Activated CD4-positive, alpha-beta memory T cell treated with anti-CD3 and anti-CD28 coated beads for 36 hours (primary cell): ENCODE measurements at regions of chr14 and their contacts with region 1.

Region 1: DNA sequence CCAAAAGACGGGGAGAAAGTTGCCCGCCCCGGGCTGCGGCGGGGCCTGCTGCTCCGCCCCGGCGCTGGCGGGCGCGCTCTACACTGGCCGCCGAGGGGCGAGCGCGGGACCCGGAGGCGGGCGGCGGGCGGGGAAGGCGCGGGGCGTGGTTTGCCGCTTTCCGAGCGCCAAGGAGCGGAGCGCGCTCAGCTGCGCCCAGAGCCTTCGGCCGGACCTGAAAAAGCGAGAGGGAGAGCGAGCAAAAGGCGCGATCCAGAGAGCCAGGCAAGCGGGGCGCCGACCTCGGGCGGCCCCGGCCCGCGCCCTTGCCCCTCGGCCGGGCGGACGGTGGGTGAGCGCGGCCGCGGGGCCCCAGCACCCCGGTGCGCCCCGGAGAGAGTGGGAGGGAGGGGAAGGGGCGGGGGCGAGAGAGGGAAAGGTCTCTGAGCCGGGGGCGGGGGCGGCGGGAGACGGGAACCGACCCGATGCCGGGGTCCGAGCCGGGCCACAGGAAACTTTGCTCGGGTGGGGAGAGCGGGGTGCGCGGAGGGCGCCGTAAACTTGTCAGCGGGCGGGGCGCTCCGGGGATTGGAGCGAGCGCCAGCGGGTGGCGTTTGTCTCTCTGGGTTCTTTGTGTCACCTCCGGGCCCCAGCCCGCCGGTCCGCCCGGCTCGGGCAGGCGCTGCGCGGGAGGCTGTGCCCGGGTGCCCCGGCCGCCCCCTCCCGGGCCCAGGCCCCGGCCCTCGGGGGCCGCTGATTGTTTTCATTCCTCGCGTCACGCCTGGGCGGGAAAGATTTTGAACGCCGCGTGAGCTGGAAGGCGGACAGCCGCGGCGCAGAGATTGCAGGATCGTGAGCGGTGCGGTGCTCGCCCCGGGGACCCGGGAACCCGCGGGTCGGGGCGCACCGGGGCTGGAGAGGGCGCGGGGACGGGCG is at the start of gene SYNE2:
- DNase-seq: peak; percentile 87
- H3K4me3 Mint-ChIP-seq: peak within 1 kb of the TSS; percentile 89
- H3K27ac Mint-ChIP-seq: peak within 1 kb of the TSS; percentile 86
- H3K4me1 Mint-ChIP-seq: peaks cover 39% of the 10 kb centered on the region
- H3K27me3 Mint-ChIP-seq: no peaks in the 10 kb centered on the region
- total RNA-seq, gene SYNE2: 27.6 to 27.7 TPM

Region 2: DNA sequence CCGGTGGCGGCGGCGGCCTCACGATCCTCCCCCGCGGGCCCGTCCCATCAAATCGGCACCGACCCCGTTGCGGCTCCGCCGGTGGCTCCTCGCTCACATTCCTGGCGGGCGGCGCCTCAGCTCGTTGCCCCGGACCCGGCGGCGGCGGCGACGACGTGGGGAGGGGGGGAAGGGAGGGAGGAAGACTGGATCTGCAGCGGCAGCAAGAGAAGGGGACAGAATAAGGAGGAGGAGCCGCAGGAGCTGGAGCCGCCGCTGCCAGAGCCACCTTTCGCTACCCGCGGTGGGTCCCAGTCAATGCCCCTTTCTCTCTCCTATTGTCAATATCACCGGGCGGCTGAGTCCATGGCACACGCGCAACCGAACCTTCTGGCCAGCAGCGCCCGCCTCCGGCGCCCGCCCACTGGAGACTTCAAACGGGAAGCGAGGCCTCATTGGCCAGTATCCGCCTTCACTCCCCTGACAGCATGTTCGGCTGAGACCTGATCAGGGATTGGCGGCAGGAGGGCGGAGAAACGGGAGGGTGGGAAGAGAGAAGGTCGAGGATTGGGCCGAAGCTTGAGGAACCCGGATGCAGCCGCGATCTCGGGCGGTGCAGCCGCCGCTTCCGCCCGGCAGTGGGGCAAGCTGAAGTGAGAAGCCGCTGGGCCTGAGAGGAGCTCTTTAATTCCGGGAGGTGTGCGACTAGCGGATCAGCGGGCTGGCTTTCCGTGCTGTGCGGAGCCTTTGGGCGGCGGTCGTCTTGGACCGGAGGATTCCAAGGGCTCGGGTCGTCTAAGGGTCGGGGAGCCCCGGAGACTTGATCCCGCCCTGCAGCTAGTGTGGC is 309.9 kb before region 1 on chr14 and contains the start of gene PPP2R5E:
- CTCF ChIA-PET with region 1: no interaction called
- POLR2A ChIA-PET with region 1: no interaction called
- intact Hi-C with region 1: loop called (anchors 10 kb)
- DNase-seq: peak; percentile 99
- H3K4me3 Mint-ChIP-seq: peak within 1 kb of the TSS; percentile 82
- H3K27ac Mint-ChIP-seq: peak within 1 kb of the TSS; percentile 86
- H3K4me1 Mint-ChIP-seq: peaks cover 31% of the 10 kb centered on the region
- H3K27me3 Mint-ChIP-seq: no peaks in the 10 kb centered on the region
- total RNA-seq, gene PPP2R5E: 37.7 to 37.8 TPM

Region 3: DNA sequence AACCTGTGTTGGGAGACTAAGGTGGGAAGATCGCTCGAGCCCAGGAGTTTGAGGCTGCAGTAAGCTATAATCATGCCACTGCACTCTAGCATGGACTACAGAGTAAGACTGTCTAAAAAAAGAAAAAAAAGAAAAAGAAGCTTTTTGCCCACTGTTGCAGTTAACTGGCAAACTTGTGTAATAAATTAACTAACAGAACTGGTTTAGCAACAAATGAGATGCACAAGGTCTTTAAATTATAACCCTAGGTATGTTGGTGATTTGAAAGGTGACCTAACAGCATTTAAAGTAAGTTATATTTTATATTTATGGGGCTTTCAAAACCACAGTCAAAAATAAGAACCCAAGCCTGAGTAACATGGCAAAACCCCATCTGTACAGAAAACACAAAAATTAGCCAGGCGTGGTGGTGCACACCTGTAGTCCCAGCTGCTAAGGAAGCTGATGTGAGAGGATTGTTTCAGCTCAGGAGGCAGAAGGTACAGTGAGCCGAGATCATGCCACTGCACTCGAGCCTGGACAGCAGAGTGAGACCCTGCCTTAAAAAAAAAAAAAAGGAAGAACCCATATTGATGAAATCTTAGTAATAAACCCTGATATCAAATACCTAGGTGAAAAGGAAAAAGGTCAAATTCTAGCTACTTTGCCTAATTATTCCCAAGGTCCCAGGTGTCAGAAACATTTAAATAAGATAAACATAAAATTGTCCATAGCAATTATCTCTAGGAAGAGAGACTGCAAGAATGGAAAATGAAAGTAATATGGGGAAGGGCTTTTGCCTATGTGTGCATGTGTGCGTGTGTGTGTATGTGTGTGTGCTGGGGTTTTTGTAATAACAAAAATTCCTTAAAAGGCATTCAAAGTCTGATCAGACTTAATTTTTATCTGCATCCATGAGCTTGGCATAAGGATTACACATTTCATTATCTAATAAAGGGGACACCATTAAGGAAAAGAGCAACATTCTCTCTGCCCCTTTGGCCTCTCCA is 15.2 kb after region 1 on chr14:
- CTCF ChIA-PET with region 1: interaction called, 11 read pairs
- POLR2A ChIA-PET with region 1: interaction called, 11 read pairs
- intact Hi-C with region 1: loop called (anchors 1 kb)
- DNase-seq: peak; percentile 24
- H3K4me3 Mint-ChIP-seq: peak overlapping the region; percentile 48
- H3K27ac Mint-ChIP-seq: peak overlapping the region; percentile 49
- H3K4me1 Mint-ChIP-seq: peaks cover 59% of the 10 kb centered on the region
- H3K27me3 Mint-ChIP-seq: no peaks in the 10 kb centered on the region

Region 4: DNA sequence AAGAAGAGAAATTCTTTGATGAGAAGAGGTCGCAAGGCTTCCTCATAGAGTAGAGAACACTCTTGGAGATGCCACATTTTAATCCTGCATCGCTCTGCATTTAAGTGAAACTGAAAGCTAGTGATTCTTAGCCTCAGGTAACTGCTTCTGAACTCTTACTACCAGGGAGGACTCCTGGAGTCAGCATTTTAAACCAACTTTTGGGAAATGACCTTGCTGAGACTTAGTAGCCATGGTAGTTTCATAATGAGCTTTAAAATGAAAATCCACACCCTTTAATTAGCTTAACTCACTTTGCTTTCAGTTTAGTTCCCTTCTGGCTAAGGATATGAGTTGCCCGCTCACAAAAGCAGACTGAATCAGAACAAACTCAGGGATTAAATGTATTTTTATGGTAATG is 80.0 kb after region 1 on chr14:
- CTCF ChIA-PET with region 1: interaction called, 3 read pairs
- POLR2A ChIA-PET with region 1: interaction called, 10 read pairs
- intact Hi-C with region 1: loop called (anchors 1 kb)
- DNase-seq: peak; percentile 10
- H3K4me3 Mint-ChIP-seq: peak overlapping the region; percentile 27
- H3K27ac Mint-ChIP-seq: peak overlapping the region; percentile 10
- H3K4me1 Mint-ChIP-seq: peaks cover 29% of the 10 kb centered on the region
- H3K27me3 Mint-ChIP-seq: no peaks in the 10 kb centered on the region

Region 5: GRCh38 chr14:64137657-64138290 is 284.7 kb after region 1 on chr14:
- CTCF ChIA-PET with region 1: no interaction called
- POLR2A ChIA-PET with region 1: no interaction called
- intact Hi-C with region 1: no loop called
- DNase-seq: no peak
- H3K4me3 Mint-ChIP-seq: no peak overlapping the region
- H3K27ac Mint-ChIP-seq: no peak overlapping the region
- H3K4me1 Mint-ChIP-seq: no peaks in the 10 kb centered on the region
- H3K27me3 Mint-ChIP-seq: no peaks in the 10 kb centered on the region

Region 6: DNA sequence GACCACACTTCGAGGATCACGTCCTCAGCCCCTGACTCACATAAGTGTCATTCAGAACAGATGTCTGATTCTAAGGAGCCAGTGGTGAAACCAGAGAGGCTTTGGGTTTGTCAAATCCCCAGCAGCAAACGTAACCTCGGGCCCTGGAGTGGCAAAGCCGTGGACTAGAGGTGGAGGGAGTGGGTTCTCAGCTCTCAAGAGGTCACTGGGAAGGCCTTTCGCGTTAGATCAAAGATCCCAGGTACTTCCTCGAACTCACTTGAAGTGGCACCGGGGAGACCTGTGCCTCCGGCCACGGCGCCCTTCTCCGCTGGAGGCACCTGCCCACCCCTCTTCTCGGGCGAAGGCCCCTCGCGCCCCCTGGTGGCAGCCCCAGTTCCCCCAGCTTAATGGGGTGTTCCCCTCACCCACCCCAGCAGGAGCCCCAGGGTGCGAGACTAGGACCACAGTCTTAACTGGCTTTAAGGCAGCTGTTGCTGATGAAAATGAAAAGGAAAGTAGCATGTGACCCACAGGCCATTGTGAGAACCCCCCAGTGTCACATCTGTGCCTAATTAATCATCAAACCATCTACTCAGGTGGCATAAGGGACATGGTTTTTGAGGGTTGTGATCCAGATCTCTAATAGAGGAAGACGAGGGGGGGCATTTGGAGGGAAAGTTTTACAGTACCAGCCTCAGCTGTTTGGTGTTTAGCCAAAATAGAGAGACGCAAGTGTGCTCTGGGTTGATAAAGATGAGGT is 441.8 kb after region 1 on chr14:
- CTCF ChIA-PET with region 1: interaction called, 4 read pairs
- POLR2A ChIA-PET with region 1: no interaction called
- intact Hi-C with region 1: loop called (anchors 2 kb)
- DNase-seq: peak; percentile 91
- H3K4me3 Mint-ChIP-seq: peak overlapping the region; percentile 70
- H3K27ac Mint-ChIP-seq: no peak overlapping the region
- H3K4me1 Mint-ChIP-seq: peaks cover 29% of the 10 kb centered on the region
- H3K27me3 Mint-ChIP-seq: peaks cover 14% of the 10 kb centered on the region